Naive thymus-derived CD4-positive, alpha-beta T cell (primary cell): ENCODE measurements at regions of chr9 and their contacts with region 1.

Region 1: GRCh38 chr9:105694190-105694847 is at the start of gene TMEM38B:
- DNase-seq: peak; percentile 72 to 91 (median 85)
- ATAC-seq: peak; percentile 92
- H3K4me3 ChIP-seq: peak within 1 kb of the TSS; percentile 79
- H3K4me3 Mint-ChIP-seq: peak within 1 kb of the TSS; percentile 80 to 97 (median 90)
- H3K27ac ChIP-seq: peak within 1 kb of the TSS; percentile 64
- H3K27ac Mint-ChIP-seq: peak within 1 kb of the TSS; percentile 44 to 88 (median 70)
- H3K4me1 ChIP-seq: peaks cover 7 to 10% of the 10 kb centered on the region in 2 donors
- H3K4me1 Mint-ChIP-seq: peaks cover 13 to 49% (median 40%) of the 10 kb centered on the region in 7 donors
- H3K27me3 ChIP-seq: peaks cover 0 to 3% of the 10 kb centered on the region in 2 donors
- H3K27me3 Mint-ChIP-seq: peaks cover 13 to 31% (median 26%) of the 10 kb centered on the region in 5 donors
- total RNA-seq, gene TMEM38B: 5.8 to 21.0 (median 15.2) TPM

Region 2: GRCh38 chr9:104747558-104748358 is 946.6 kb before region 1 on chr9 and contains the start of gene NIPSNAP3A:
- CTCF ChIA-PET with region 1: no interaction called
- POLR2A ChIA-PET with region 1: no interaction called
- intact Hi-C with region 1: loop called (anchors 1 to 2 kb)
- DNase-seq: peak; percentile 78 to 96 (median 89)
- ATAC-seq: peak; percentile 93
- H3K4me3 ChIP-seq: peak within 1 kb of the TSS; percentile 87
- H3K4me3 Mint-ChIP-seq: peak within 1 kb of the TSS; percentile 88 to 98 (median 96)
- H3K27ac ChIP-seq: peak within 1 kb of the TSS; percentile 93
- H3K27ac Mint-ChIP-seq: peak within 1 kb of the TSS; percentile 92 to 99 (median 97)
- H3K4me1 ChIP-seq: peaks cover 0 to 8% of the 10 kb centered on the region in 2 donors
- H3K4me1 Mint-ChIP-seq: peaks cover 14 to 26% (median 22%) of the 10 kb centered on the region in 7 donors
- H3K27me3 ChIP-seq: no peaks in the 10 kb centered on the region
- H3K27me3 Mint-ChIP-seq: peaks cover 0 to 2% (median 0%) of the 10 kb centered on the region in 5 donors
- total RNA-seq, gene NIPSNAP3A: 7.1 to 17.4 (median 13.4) TPM

Region 3: GRCh38 chr9:104907278-104907951 is 786.9 kb before region 1 on chr9:
- CTCF ChIA-PET with region 1: no interaction called
- POLR2A ChIA-PET with region 1: no interaction called
- intact Hi-C with region 1: no loop called
- DNase-seq: no peak
- ATAC-seq: no peak
- H3K4me3 ChIP-seq: no peak overlapping the region
- H3K4me3 Mint-ChIP-seq: no peak overlapping the region
- H3K27ac ChIP-seq: no peak overlapping the region
- H3K27ac Mint-ChIP-seq: no peak overlapping the region
- H3K4me1 ChIP-seq: no peaks in the 10 kb centered on the region
- H3K4me1 Mint-ChIP-seq: peaks cover 0 to 59% (median 19%) of the 10 kb centered on the region in 7 donors
- H3K27me3 ChIP-seq: no peaks in the 10 kb centered on the region
- H3K27me3 Mint-ChIP-seq: peaks cover 0 to 6% (median 0%) of the 10 kb centered on the region in 5 donors

Region 4: GRCh38 chr9:105127863-105128220 is 566.5 kb before region 1 on chr9:
- CTCF ChIA-PET with region 1: no interaction called
- POLR2A ChIA-PET with region 1: no interaction called
- intact Hi-C with region 1: loop called in 1 of 2 experiments (anchors 10 kb)
- DNase-seq: peak in 8 of 9 donors; percentile 41 to 92 (median 90)
- ATAC-seq: peak; percentile 99
- H3K4me3 ChIP-seq: no peak overlapping the region
- H3K4me3 Mint-ChIP-seq: peak overlapping the region; percentile 35 to 84 (median 74)
- H3K27ac ChIP-seq: no peak overlapping the region
- H3K27ac Mint-ChIP-seq: peak overlapping the region; percentile 42 to 95 (median 78)
- H3K4me1 ChIP-seq: peaks cover 31 to 55% of the 10 kb centered on the region in 2 donors
- H3K4me1 Mint-ChIP-seq: peaks cover 36 to 67% (median 63%) of the 10 kb centered on the region in 7 donors
- H3K27me3 ChIP-seq: no peaks in the 10 kb centered on the region
- H3K27me3 Mint-ChIP-seq: peaks cover 0 to 35% (median 0%) of the 10 kb centered on the region in 5 donors

Region 5: GRCh38 chr9:105557771-105558610 is 136.3 kb before region 1 on chr9 and contains the start of gene FKTN:
- CTCF ChIA-PET with region 1: no interaction called
- POLR2A ChIA-PET with region 1: no interaction called
- intact Hi-C with region 1: loop called (anchors 1 kb)
- DNase-seq: peak; percentile 58 to 85 (median 83)
- ATAC-seq: peak; percentile 98
- H3K4me3 ChIP-seq: peak within 1 kb of the TSS; percentile 95
- H3K4me3 Mint-ChIP-seq: peak within 1 kb of the TSS; percentile 90 to 96 (median 94)
- H3K27ac ChIP-seq: peak within 1 kb of the TSS; percentile 61
- H3K27ac Mint-ChIP-seq: peak within 1 kb of the TSS; percentile 66 to 92 (median 86)
- H3K4me1 ChIP-seq: peaks cover 0 to 6% of the 10 kb centered on the region in 2 donors
- H3K4me1 Mint-ChIP-seq: peaks cover 11 to 37% (median 20%) of the 10 kb centered on the region in 7 donors
- H3K27me3 ChIP-seq: no peaks in the 10 kb centered on the region
- H3K27me3 Mint-ChIP-seq: no peaks in the 10 kb centered on the region
- total RNA-seq, gene FKTN: 8.0 to 15.5 (median 10.8) TPM

Region 6: GRCh38 chr9:105662193-105663075 is 31.9 kb before region 1 on chr9 and contains the start of gene TAL2:
- CTCF ChIA-PET with region 1: no interaction called
- POLR2A ChIA-PET with region 1: no interaction called
- intact Hi-C with region 1: no loop called
- DNase-seq: no peak
- ATAC-seq: no peak
- H3K4me3 ChIP-seq: no peak within 1 kb of the TSS
- H3K4me3 Mint-ChIP-seq: no peak within 1 kb of the TSS
- H3K27ac ChIP-seq: no peak within 1 kb of the TSS
- H3K27ac Mint-ChIP-seq: no peak within 1 kb of the TSS
- H3K4me1 ChIP-seq: no peaks in the 10 kb centered on the region
- H3K4me1 Mint-ChIP-seq: peaks cover 0 to 3% (median 0%) of the 10 kb centered on the region in 7 donors
- H3K27me3 ChIP-seq: peaks cover 0 to under 1% of the 10 kb centered on the region in 2 donors
- H3K27me3 Mint-ChIP-seq: peaks cover 14 to 29% (median 23%) of the 10 kb centered on the region in 5 donors
- total RNA-seq, gene TAL2: 0.36 TPM in 1 of 5 experiments, not detected in the others

Region 7: GRCh38 chr9:105713260-105714019 is 19.1 kb after region 1 on chr9:
- CTCF ChIA-PET with region 1: interaction called, 8 read pairs
- POLR2A ChIA-PET with region 1: interaction called, 4 read pairs
- intact Hi-C with region 1: loop called in 1 of 2 experiments (anchors 1 kb)
- DNase-seq: no peak
- ATAC-seq: peak; percentile 18
- H3K4me3 ChIP-seq: no peak overlapping the region
- H3K4me3 Mint-ChIP-seq: no peak overlapping the region
- H3K27ac ChIP-seq: no peak overlapping the region
- H3K27ac Mint-ChIP-seq: no peak overlapping the region
- H3K4me1 ChIP-seq: no peaks in the 10 kb centered on the region
- H3K4me1 Mint-ChIP-seq: peaks cover 0 to 14% (median 4%) of the 10 kb centered on the region in 7 donors
- H3K27me3 ChIP-seq: no peaks in the 10 kb centered on the region
- H3K27me3 Mint-ChIP-seq: no peaks in the 10 kb centered on the region

Region 8: DNA sequence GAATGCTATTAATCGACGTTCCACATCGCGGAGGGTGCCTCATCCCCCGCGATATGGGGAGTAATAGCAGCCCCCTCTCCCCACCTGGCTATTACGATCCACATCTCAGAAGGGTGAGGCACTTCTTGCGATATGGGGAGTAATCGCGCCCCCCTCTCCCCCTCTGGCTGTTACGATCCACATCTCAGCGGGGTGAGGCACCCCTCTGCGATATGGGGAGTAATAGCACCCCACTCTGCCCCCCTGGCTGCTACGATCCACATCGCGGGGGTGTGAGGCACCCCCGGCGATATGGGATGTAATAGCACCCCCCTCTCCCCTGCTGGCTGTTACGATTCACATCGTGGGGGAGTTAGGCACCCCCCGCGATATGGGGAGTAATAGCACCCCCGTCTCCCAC is 128.5 kb after region 1 on chr9:
- CTCF ChIA-PET with region 1: no interaction called
- POLR2A ChIA-PET with region 1: no interaction called
- intact Hi-C with region 1: no loop called
- DNase-seq: no peak
- ATAC-seq: no peak
- H3K4me3 ChIP-seq: no peak overlapping the region
- H3K4me3 Mint-ChIP-seq: no peak overlapping the region
- H3K27ac ChIP-seq: no peak overlapping the region
- H3K27ac Mint-ChIP-seq: no peak overlapping the region
- H3K4me1 ChIP-seq: no peaks in the 10 kb centered on the region
- H3K4me1 Mint-ChIP-seq: no peaks in the 10 kb centered on the region
- H3K27me3 ChIP-seq: no peaks in the 10 kb centered on the region
- H3K27me3 Mint-ChIP-seq: no peaks in the 10 kb centered on the region

Region 9: GRCh38 chr9:107282753-107283625 is 1588.7 kb after region 1 on chr9 and contains the start of gene RAD23B:
- CTCF ChIA-PET with region 1: no interaction called
- POLR2A ChIA-PET with region 1: no interaction called
- intact Hi-C with region 1: loop called in 1 of 2 experiments (anchors 2 kb)
- DNase-seq: peak; percentile 97 to 100 (median 99)
- ATAC-seq: peak; percentile 94
- H3K4me3 ChIP-seq: peak within 1 kb of the TSS; percentile 78
- H3K4me3 Mint-ChIP-seq: peak within 1 kb of the TSS; percentile 89 to 99 (median 96)
- H3K27ac ChIP-seq: peak within 1 kb of the TSS; percentile 92
- H3K27ac Mint-ChIP-seq: peak within 1 kb of the TSS; percentile 85 to 97 (median 95)
- H3K4me1 ChIP-seq: peaks cover 9 to 31% of the 10 kb centered on the region in 2 donors
- H3K4me1 Mint-ChIP-seq: peaks cover 28 to 52% (median 37%) of the 10 kb centered on the region in 7 donors
- H3K27me3 ChIP-seq: no peaks in the 10 kb centered on the region
- H3K27me3 Mint-ChIP-seq: peaks cover 0 to 9% (median 0%) of the 10 kb centered on the region in 5 donors
- total RNA-seq, gene RAD23B: 48.7 to 102 (median 55.6) TPM

Region 10: DNA sequence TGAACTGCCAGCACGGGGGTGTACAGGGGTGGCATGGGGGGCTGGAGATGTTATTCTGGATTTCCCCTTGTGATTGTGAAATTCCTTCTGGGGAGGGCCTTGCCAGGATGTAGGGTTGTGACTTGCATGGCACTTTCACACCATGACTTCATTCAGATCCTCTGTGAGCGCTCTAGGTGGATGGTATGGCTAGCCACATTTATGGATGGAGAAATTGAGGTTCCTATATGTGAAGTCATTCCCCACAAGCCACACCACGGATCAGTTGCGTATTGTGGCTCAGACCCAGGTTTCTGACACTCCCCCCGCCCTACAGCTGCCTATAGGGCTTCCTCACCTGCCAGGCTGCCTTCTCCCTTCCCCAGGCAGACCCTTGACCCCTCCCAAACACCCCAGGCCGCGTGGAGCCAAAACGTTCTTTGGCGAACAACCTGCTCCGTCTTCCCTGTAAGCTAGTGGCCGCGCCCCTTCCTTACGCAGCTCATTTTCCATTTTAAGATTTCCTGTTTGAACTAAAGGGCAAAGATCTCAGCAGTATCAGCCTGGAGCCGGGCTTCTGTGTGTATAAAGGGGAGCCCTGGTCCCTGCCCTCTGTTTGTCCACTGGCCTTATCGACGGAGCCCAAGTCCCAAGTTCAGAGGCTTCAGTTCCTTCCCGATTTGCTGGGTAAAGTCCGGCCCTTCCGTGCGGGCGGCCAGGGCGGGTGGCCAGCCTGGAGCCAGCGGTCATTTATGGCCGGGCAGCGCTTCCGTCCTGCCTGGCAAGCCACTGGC is 1893.1 kb after region 1 on chr9:
- CTCF ChIA-PET with region 1: no interaction called
- POLR2A ChIA-PET with region 1: no interaction called
- intact Hi-C with region 1: no loop called
- DNase-seq: no peak
- ATAC-seq: peak; percentile 18
- H3K4me3 ChIP-seq: no peak overlapping the region
- H3K4me3 Mint-ChIP-seq: peak overlapping the region in 1 of 10 donors; percentile 35
- H3K27ac ChIP-seq: no peak overlapping the region
- H3K27ac Mint-ChIP-seq: no peak overlapping the region
- H3K4me1 ChIP-seq: no peaks in the 10 kb centered on the region
- H3K4me1 Mint-ChIP-seq: peaks cover 0 to 2% (median 0%) of the 10 kb centered on the region in 7 donors
- H3K27me3 ChIP-seq: no peaks in the 10 kb centered on the region
- H3K27me3 Mint-ChIP-seq: peaks cover 0 to 34% (median 16%) of the 10 kb centered on the region in 5 donors